Posterior cingulate gyrus (tissue), 11 donors: ENCODE measurements at regions of chr6 and their contacts with region 1.

Region 1: DNA sequence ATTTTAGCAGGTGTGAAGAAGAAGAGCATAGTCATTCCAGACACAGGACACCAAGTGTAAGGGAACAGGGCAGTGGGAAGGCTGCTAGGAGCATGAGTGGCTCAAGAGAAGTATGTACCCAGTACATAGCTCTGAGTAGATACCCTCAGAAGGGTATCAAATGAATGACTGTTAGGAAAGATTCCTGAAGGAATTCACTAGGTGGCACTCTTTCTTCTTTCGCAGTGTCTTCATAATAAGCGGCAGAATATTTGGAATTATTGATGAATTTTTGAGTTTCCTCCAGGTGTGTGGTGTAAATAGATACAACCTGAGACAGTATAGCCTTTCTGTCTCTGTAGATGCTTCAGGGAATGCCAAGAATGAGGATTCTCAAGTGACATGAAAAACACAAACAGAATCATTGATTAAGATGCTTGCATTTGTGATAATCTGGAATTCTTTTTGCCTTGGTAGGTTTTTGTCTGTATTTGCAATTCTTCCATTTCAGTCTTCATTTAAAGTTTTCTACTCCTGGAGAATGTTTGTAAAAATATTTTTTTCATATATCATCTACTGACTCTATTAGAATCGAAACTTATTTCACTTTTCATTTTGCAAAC is 264.3 kb upstream of the RIMS1 start:
- DNase-seq: no peak

Region 2: DNA sequence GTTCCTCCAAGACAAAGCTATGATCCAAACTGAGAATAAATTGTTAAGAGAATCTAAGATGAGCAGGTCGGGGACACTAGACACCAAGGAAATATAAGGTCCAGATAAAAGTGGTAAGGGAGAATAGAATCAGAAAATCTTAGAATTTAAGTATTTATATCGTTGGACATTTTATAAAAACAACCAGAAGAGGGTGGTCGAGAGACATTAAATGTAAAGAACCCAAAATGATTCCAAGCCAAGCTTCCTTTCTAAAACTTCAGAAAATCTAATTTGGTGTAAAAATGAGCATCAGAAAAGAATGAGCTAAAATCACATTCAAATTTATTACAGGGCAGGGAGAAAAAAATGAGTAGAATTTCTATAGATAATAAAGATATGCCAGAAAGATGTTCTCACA is 431.2 kb before region 1 on chr6:
- intact Hi-C with region 1: no loop called
- DNase-seq: no peak

Region 3: GRCh38 chr6:72084992-72085569 is 463.1 kb after region 1 on chr6:
- intact Hi-C with region 1: loop called (anchors 10 kb)
- DNase-seq: no peak